RWPE1 (cell line): ENCODE measurements at regions of chr1 and their contacts with region 1.

Region 1: DNA sequence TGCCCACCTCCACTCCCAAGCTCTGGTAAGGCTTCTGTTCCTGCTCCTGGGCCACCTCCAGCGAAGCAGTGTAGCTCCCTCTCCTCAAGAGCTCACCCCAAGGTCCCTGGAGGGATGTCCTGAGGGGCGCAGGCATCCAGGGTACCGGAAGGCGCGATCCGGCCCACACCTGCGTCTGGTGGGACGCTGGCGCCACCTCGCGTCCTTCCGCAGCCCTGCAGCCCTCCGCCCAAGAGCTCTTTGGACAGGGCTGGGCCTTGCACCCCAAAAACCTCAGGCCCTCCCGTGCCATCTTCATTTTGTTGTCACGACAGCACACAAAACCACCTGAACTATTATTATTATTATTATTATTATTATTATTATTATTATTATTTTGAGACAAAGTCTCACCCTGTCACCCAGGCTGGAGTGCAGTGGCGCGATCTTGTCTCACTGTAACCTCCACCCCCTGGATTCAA is 49.2 kb upstream of the PAX7 start:
- DNase-seq: peak; percentile 45
- H3K27ac ChIP-seq: no peak overlapping the region
- CTCF ChIP-seq: peak; percentile 70

Region 2: DNA sequence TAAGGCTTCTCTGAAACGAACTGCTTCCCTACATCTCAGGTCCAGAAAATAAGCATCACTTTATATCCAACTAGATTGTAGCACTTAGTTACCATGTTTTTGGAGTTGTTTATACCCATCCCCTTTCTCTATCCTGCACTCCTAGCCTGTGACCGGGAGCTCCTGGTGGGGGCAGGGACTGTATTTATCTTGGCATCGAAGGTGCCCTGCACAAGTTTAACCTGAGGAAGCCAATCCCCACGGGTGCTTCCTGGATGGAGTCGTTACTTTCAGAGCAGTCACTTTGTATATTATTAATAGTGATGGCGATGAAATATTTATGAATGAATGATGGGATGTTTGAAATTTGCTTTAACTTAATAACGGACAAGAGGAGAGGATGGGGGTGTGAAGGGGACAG is 26.9 kb before region 1 on chr1:
- CTCF ChIA-PET with region 1: interaction called, 10 read pairs
- POLR2A ChIA-PET with region 1: no interaction called
- DNase-seq: no peak
- H3K27ac ChIP-seq: no peak overlapping the region
- CTCF ChIP-seq: no peak

Region 3: DNA sequence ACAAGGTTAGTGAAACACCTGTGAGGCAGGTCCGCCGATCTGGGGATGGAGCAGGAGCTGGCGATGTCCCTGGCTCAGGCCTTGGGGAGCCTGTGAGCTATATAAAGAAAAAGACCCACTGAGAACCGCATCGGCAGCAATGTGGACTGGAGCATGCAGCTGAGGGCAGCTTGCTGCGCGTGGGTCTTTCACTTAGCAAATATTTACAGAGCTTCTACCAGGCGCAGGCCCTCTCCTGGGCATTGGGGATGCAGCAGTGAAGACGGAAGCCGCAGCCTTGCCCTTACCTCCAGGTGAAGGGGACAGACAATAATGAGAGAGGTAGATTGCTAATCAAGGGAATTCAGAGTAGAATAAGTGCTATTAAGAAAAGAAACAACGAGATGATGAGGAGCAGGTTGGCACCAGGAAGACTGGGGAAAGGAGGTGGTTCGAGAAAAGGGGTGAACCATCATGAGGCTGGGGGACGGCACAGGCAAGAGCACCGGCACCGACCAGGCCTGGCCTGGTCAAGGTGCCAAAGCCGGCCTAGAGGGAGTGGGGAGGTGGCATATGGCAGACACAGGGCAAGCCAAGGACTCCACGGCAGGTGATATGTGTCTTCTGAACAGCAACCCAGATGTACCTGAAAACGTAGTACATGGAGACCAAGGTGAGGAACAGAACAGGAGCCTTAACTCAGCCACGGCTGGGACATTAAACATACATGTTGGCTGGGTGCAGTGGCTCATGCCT is 11.5 kb before region 1 on chr1:
- CTCF ChIA-PET with region 1: interaction called, 13 read pairs
- POLR2A ChIA-PET with region 1: no interaction called
- DNase-seq: no peak
- H3K27ac ChIP-seq: no peak overlapping the region
- CTCF ChIP-seq: no peak